Right cardiac atrium (tissue), 5 donors: ENCODE measurements at regions of chr11 and their contacts with region 1.

Region 1: DNA sequence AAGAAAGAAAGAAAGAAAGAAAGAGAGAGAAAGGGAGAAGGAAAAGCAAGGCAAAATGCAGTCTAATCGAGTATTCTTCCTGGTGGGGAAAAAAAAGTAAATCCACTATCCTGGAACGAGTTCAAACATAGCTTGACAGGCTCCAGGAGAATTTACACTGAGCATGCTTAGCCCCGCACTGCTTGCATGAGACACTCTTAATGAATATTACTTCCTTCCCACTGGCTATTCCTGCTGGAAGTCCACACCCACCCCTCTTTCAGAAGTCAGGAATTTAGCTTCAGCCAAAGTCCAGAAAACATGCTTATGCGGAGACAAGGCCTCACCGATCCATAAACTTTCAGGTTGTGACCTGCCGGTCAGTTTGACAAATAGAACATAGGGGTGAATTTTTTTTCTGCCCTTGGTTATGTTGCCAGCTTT is 251.8 kb upstream of the BLID start:
- DNase-seq: peak; percentile 41 to 75 (median 44)
- ATAC-seq: peak; percentile 89 to 92
- H3K4me3 ChIP-seq: peak overlapping the region; percentile 30
- H3K27ac ChIP-seq: peak overlapping the region; percentile 62
- H3K4me1 ChIP-seq: no peaks in the 10 kb centered on the region
- H3K27me3 ChIP-seq: no peaks in the 10 kb centered on the region

Region 2: GRCh38 chr11:122317305-122317704 is 50.5 kb before region 1 on chr11:
- intact Hi-C with region 1: no loop called
- DNase-seq: no peak
- ATAC-seq: no peak
- H3K4me3 ChIP-seq: no peak overlapping the region
- H3K27ac ChIP-seq: no peak overlapping the region
- H3K4me1 ChIP-seq: peaks cover 9% of the 10 kb centered on the region
- H3K27me3 ChIP-seq: no peaks in the 10 kb centered on the region

Region 3: GRCh38 chr11:122439911-122440810 is 72.3 kb after region 1 on chr11:
- intact Hi-C with region 1: loop called in 2 of 4 experiments (anchors 2 to 5 kb)
- DNase-seq: peak; percentile 64 to 81 (median 77)
- ATAC-seq: peak; percentile 90
- H3K4me3 ChIP-seq: peak overlapping the region; percentile 72
- H3K27ac ChIP-seq: peak overlapping the region; percentile 86
- H3K4me1 ChIP-seq: no peaks in the 10 kb centered on the region
- H3K27me3 ChIP-seq: no peaks in the 10 kb centered on the region

Region 4: GRCh38 chr11:122711831-122712381 is 344.1 kb after region 1 on chr11:
- intact Hi-C with region 1: no loop called
- DNase-seq: peak in 1 of 3 donors; percentile 41
- ATAC-seq: no peak
- H3K4me3 ChIP-seq: no peak overlapping the region
- H3K27ac ChIP-seq: no peak overlapping the region
- H3K4me1 ChIP-seq: peaks cover 5% of the 10 kb centered on the region
- H3K27me3 ChIP-seq: no peaks in the 10 kb centered on the region